Motor neuron (in vitro differentiated cells): ENCODE measurements at regions of chrX and their contacts with region 1.

Region 1: DNA sequence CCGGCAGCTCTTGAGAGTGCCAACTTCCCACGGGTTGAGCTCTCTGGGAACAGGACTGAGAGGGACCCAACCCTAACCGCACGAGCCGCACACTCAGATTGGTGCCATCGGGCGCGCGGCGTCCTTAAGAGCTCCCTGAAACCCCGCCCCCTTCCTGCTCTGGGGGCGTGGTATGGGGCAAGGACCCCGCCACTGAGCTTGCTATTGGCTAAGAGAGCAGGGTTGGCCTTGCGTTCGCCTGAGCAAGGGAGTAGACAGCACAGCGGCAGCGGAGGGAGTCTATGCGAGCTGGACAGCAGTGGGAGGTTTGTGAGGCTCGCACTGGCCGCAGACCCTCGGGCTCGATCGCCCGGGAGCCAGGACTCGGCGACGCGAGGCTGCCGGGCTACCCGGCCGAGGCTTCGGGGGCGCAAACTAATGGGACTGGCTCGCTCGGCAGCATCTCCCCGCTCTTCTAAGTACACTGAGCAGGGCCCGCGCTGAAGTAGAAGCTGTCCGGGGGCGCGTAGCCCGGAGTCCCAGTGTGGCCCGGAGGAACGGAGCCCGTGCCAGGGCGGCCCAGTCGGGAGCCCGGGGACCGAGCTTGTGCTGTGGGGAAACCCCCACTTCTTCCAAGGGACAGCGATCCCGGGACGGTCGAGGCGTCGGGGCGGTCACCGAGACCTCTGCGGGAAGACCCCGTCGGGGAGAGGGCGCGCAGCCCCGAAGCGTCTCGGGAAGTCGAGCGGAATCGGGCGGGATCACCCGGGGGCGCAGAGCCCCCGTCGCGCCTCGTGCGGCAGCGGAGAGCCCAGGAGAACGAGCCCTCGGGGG is at the start of gene EFNB1:
- ATAC-seq: peak; percentile 70 to 89 (median 86)
- H3K4me3 ChIP-seq: peak within 1 kb of the TSS; percentile 51 to 70 (median 66)
- H3K27ac ChIP-seq: peak within 1 kb of the TSS; percentile 74 to 76
- H3K4me1 ChIP-seq: peaks cover 4 to 7% of the 10 kb centered on the region in 2 donors
- total RNA-seq, gene EFNB1: 10.2 to 57.1 (median 39.2) TPM

Region 2: GRCh38 chrX:69024931-69025330 is 196.0 kb after region 1 on chrX:
- in situ Hi-C with region 1: loop called in 1 of 9 experiments (anchors 25 kb)
- ATAC-seq: peak in 3 of 8 experiments; percentile 85 to 96 (median 93)
- H3K4me3 ChIP-seq: no peak overlapping the region
- H3K27ac ChIP-seq: no peak overlapping the region
- H3K4me1 ChIP-seq: peaks cover 35 to 37% of the 10 kb centered on the region in 2 donors

Region 3: GRCh38 chrX:69133921-69134542 is 305.1 kb after region 1 on chrX:
- in situ Hi-C with region 1: loop called in 1 of 9 experiments (anchors 25 kb)
- ATAC-seq: peak; percentile 23 to 95 (median 46)
- H3K4me3 ChIP-seq: no peak overlapping the region
- H3K27ac ChIP-seq: no peak overlapping the region
- H3K4me1 ChIP-seq: peaks cover 67 to 68% of the 10 kb centered on the region in 2 donors

Region 4: DNA sequence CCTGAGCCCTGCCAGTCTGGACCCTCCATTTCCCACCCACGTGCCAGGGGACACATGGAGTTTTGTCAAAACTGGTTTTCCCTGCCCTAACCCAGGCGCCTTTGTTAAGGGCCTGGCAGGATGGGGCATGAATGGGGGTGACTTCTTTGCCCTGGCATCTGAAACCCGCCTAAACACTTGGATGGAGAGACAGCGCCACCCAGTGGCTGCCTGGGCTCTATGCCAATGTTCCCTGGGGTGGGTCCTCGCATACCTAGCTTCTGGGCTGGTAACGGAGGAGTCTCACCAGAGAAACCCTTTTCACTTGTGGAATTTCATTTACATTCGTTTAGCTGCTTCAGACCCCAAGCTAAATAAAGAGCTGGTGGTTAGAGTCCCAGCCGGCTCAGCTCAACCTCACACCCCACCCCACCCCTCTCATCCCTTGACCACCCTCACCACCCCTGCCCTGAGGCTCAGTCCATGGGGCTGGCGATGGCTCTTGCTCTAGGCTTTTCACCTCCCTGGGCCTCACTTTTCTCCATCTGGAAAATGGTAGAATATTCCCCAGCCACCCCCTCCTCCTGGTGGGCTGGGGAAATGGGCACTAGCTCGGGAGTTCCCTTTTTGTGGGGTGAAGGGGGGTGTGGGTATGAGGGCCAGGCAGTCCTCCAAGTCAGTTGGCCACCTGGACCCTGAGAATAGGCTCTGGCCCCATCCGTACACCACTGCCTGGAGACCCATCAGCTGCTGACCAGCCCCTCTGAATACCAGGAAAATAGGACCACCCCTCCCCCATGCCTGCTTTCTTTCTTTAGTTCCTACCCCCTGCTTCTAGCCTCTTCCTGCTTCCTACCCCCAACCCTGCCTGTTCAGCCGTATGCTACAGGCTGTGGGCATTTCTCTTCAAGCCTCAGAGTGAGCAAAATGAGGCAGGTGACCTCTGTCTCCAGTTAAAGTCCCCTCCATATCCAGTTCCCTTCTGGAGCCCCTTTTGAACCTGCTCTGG is 393.5 kb after region 1 on chrX:
- in situ Hi-C with region 1: loop called in 6 of 9 experiments (anchors 10 to 25 kb)
- ATAC-seq: peak; percentile 77 to 97 (median 93)
- H3K4me3 ChIP-seq: no peak overlapping the region
- H3K27ac ChIP-seq: peak overlapping the region in 1 of 2 donors; percentile 52
- H3K4me1 ChIP-seq: peaks cover 17 to 29% of the 10 kb centered on the region in 2 donors

Region 5: GRCh38 chrX:69285881-69286564 is 457.1 kb after region 1 on chrX:
- in situ Hi-C with region 1: loop called in 2 of 9 experiments (anchors 25 kb)
- ATAC-seq: peak; percentile 51 to 90 (median 79)
- H3K4me3 ChIP-seq: peak overlapping the region; percentile 3 to 28 (median 16)
- H3K27ac ChIP-seq: peak overlapping the region in 1 of 2 donors; percentile 45
- H3K4me1 ChIP-seq: peaks cover 22 to 27% of the 10 kb centered on the region in 2 donors